Activated naive CD4-positive, alpha-beta T cell treated with anti-CD3 and anti-CD28 coated beads, Interleukin-2, amount 10 ng/mL, durations not matched to agents 7 days and 5 days (primary cell): ENCODE measurements at regions of chr10 and their contacts with region 1.

Region 1: DNA sequence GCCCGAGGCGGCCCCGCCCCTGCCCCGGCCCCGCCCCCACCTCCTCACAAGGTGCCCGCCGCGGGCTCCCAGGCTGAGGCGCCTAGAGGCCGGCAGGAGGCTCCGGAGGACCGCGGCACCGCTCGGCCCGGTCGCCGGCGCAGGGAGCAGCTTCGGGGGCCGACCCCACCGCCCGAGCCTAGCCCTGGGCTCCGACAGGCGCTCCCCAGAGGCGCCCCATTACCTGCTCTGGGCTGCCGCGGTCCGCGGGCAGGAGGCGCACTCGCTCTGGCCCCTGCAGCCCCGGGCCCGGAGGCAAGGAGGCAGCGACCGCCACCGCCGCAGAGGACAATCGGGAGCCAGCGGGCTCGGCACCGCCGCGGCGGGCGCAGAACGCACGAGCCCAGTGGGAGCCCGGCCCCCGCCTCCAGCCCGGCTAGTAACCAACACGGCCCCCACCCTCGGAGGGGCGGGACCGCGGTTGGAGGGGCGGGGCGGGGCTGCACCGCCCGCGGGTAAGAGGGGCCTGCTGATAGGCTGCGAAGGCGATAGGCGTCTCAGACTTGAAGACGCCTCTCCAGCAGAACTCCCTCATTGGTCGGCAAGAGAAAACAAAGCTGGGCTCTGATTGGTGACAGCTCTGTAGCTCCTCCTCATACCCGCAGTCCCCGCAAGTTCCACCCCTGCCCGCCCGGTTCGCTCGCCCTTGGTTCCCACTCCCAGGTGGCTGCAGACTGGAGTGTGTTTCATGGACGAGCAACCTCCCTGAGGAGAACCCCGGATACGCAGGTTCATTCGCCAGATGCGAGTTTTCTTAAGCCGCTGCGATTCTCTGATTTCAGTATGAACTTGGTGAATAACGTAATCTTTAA is at the start of gene MPP7:
- DNase-seq: peak; percentile 96
- H3K4me3 Mint-ChIP-seq: peak within 1 kb of the TSS; percentile 83
- H3K27ac Mint-ChIP-seq: peak within 1 kb of the TSS; percentile 81
- H3K4me1 Mint-ChIP-seq: peaks cover 54% of the 10 kb centered on the region
- H3K27me3 Mint-ChIP-seq: peaks cover 32% of the 10 kb centered on the region

Region 2: GRCh38 chr10:28250782-28251181 is 52.1 kb before region 1 on chr10:
- CTCF ChIA-PET with region 1: interaction called, 16 read pairs
- DNase-seq: no peak
- H3K4me3 Mint-ChIP-seq: no peak overlapping the region
- H3K27ac Mint-ChIP-seq: no peak overlapping the region
- H3K4me1 Mint-ChIP-seq: peaks cover 21% of the 10 kb centered on the region
- H3K27me3 Mint-ChIP-seq: no peaks in the 10 kb centered on the region

Region 3: DNA sequence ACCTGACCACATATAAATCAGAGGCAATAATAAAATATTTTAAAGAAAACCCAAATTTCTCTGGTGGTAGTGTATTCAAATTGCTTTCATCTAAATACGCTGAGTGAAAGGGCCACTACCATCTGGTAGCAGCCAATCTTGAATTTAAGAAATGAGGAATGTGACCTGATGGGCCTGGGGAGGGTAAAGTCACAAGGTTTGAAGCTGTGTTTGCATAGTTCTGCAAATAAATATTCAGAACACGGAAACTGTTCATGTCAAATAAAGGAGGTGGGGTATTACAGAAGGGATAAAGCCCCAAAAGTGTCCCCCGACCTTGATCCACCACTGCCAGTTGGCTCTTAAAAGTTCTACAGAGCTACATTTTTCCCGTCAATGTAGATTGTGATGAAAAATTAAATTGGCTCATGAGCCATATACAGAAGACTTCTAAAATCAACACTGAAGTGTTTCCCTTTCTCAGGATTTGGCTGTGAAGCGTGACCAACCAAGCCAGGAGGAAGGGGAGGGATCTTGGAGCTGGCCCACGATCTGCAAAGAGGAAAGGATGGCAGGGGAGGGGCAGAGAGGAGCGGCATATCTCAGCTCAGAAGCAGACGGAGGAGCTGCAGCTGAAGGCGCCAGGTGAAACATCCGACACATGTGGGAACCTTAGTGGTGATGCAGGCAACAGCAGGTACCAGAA is 39.6 kb before region 1 on chr10:
- CTCF ChIA-PET with region 1: no interaction called
- DNase-seq: no peak
- H3K4me3 Mint-ChIP-seq: no peak overlapping the region
- H3K27ac Mint-ChIP-seq: no peak overlapping the region
- H3K4me1 Mint-ChIP-seq: peaks cover 14% of the 10 kb centered on the region
- H3K27me3 Mint-ChIP-seq: no peaks in the 10 kb centered on the region

Region 4: GRCh38 chr10:28334296-28334695 is 31.4 kb after region 1 on chr10:
- CTCF ChIA-PET with region 1: interaction called, 32 read pairs
- DNase-seq: peak; percentile 57
- H3K4me3 Mint-ChIP-seq: peak overlapping the region; percentile 80
- H3K27ac Mint-ChIP-seq: peak overlapping the region; percentile 99
- H3K4me1 Mint-ChIP-seq: peaks cover 78% of the 10 kb centered on the region
- H3K27me3 Mint-ChIP-seq: peaks cover 4% of the 10 kb centered on the region

Region 5: DNA sequence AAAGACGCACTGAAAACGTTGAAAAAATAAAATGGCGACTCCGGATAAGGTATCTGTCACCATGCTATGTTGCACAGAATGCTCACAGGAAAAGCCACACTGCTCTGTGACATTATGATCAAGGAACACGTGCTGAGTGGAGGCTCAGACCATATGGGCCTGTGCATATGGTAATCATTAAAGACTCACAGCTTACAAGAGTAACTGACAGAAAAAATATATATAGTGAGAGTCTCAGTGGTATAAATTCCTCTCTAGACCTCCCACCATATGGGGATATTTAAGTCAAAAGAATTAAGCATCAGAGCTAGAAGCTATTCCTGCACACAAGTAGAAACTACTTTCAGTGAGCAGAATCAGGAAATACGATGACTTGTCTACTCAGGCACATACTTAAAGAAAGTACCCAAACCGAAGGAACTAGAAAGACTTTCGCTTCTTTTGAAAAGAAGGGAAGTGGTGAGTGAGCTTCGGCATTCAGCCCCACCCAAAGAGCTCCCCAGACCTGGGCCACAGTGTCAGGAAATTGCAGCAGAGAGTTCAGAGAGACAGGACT is 65.1 kb after region 1 on chr10:
- CTCF ChIA-PET with region 1: interaction called, 20 read pairs
- DNase-seq: peak; percentile 81
- H3K4me3 Mint-ChIP-seq: peak overlapping the region; percentile 62
- H3K27ac Mint-ChIP-seq: peak overlapping the region; percentile 97
- H3K4me1 Mint-ChIP-seq: peaks cover 60% of the 10 kb centered on the region
- H3K27me3 Mint-ChIP-seq: peaks cover 4% of the 10 kb centered on the region

Region 6: GRCh38 chr10:28432210-28432676 is 129.4 kb after region 1 on chr10:
- CTCF ChIA-PET with region 1: no interaction called
- DNase-seq: peak; percentile 27
- H3K4me3 Mint-ChIP-seq: no peak overlapping the region
- H3K27ac Mint-ChIP-seq: no peak overlapping the region
- H3K4me1 Mint-ChIP-seq: peaks cover 8% of the 10 kb centered on the region
- H3K27me3 Mint-ChIP-seq: peaks cover 14% of the 10 kb centered on the region